ENCODE measurements at regions of chr17 and their contacts with region 1.

Region 1: GRCh38 chr17:43673516-43674323 is 12.0 kb upstream of the MEOX1 start:
- DNase-seq: peak; percentile 90
- ATAC-seq: peak; percentile 51
- H3K4me3 ChIP-seq: no peak overlapping the region
- H3K27ac ChIP-seq: no peak overlapping the region
- H3K4me1 ChIP-seq: peaks cover 23% of the 10 kb centered on the region
- H3K27me3 ChIP-seq: no peaks in the 10 kb centered on the region
- CTCF ChIP-seq: peak; percentile 99

Region 2: DNA sequence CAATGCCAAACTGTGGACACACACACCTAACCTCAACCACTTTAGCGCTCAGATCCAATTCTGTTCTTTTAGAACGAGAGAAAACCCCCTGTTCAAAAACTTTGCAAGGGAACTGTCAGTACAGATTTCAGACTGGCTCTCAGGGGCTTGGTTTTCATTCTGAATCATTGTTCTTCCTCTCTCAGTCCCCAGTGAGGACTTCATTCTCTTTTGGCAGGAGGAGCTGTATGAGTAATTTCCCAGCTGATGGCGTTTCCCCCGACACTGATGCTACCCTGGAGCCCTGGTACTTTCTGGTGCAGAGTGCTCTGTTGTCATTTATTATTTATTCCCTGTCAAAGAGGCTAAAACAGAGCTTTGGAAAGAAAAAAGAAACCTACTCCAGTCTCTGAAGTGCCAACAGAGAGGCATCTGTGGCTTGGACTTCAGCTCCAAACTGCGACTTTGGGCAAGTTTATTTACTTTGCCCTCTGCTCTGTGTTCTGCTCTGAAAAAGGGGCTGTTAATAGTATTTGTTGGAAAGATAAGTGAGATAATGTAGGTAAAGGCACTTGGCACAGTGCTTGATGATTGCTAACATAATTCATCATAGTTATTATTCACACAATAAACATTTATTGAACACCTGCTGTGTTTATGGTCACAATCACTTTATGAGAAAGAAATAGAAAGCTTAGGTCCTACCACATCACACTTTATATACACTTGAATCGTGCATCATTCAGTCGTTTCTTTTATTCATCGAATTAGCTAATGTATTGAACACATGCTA is 155.9 kb before region 1 on chr17:
- CTCF ChIA-PET with region 1: interaction called, 6 read pairs
- POLR2A ChIA-PET with region 1: no interaction called
- intact Hi-C with region 1: loop called (anchors 1 kb)
- DNase-seq: peak; percentile 64
- ATAC-seq: peak; percentile 86
- H3K4me3 ChIP-seq: no peak overlapping the region
- H3K27ac ChIP-seq: no peak overlapping the region
- H3K4me1 ChIP-seq: peaks cover 14% of the 10 kb centered on the region; the same call in 1 of the 2 replicates
- H3K27me3 ChIP-seq: no peaks in the 10 kb centered on the region
- CTCF ChIP-seq: no peak

Region 3: GRCh38 chr17:43576563-43577229 is 97.0 kb before region 1 on chr17:
- CTCF ChIA-PET with region 1: interaction called, 41 read pairs
- POLR2A ChIA-PET with region 1: interaction called, 3 read pairs
- intact Hi-C with region 1: loop called (anchors 1 kb)
- DNase-seq: peak; percentile 93
- ATAC-seq: peak; percentile 72
- H3K4me3 ChIP-seq: no peak overlapping the region
- H3K27ac ChIP-seq: no peak overlapping the region
- H3K4me1 ChIP-seq: peaks cover 33% of the 10 kb centered on the region
- H3K27me3 ChIP-seq: no peaks in the 10 kb centered on the region
- CTCF ChIP-seq: peak; percentile 95

Region 4: GRCh38 chr17:43584666-43585102 is 89.0 kb before region 1 on chr17:
- CTCF ChIA-PET with region 1: interaction called, 17 read pairs
- POLR2A ChIA-PET with region 1: interaction called, 4 read pairs
- intact Hi-C with region 1: no loop called
- DNase-seq: peak; percentile 66
- ATAC-seq: peak; percentile 47
- H3K4me3 ChIP-seq: no peak overlapping the region
- H3K27ac ChIP-seq: peak overlapping the region; percentile 82
- H3K4me1 ChIP-seq: peaks cover 28% of the 10 kb centered on the region
- H3K27me3 ChIP-seq: no peaks in the 10 kb centered on the region
- CTCF ChIP-seq: no peak

Region 5: DNA sequence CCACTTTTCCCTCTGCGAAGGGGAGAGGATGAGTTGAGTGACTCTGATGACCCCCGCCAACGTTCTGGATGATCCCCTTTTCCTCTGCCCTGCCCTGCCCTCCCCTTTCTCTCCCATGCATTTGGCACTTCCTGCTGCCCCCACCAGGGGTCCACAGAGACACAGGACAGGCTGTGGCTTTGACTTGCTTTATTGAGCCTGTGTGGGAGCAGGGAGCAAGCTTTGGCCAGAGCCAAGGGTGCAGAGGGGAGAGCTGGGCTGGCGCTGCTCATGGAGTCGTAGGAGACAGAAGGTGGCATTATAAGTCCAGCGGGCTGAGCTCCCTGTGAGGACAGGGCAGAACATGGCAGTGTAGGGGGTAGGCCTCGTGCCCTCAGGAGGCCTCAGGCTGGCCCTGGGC is 266.9 kb after region 1 on chr17:
- CTCF ChIA-PET with region 1: no interaction called
- POLR2A ChIA-PET with region 1: no interaction called
- intact Hi-C with region 1: no loop called
- DNase-seq: peak; percentile 60
- ATAC-seq: peak; percentile 31; the same call in 1 of the 2 replicates
- H3K4me3 ChIP-seq: no peak overlapping the region
- H3K27ac ChIP-seq: no peak overlapping the region
- H3K4me1 ChIP-seq: peaks cover 3% of the 10 kb centered on the region; the same call in 1 of the 2 replicates
- H3K27me3 ChIP-seq: no peaks in the 10 kb centered on the region
- CTCF ChIP-seq: peak; percentile 70